Activated naive CD8-positive, alpha-beta T cell treated with anti-CD3 and anti-CD28 coated beads, Interleukin-2, amount 10 ng/mL, durations not matched to agents 7 days and 5 days (primary cell): ENCODE measurements at regions of chrX and their contacts with region 1.

Region 1: DNA sequence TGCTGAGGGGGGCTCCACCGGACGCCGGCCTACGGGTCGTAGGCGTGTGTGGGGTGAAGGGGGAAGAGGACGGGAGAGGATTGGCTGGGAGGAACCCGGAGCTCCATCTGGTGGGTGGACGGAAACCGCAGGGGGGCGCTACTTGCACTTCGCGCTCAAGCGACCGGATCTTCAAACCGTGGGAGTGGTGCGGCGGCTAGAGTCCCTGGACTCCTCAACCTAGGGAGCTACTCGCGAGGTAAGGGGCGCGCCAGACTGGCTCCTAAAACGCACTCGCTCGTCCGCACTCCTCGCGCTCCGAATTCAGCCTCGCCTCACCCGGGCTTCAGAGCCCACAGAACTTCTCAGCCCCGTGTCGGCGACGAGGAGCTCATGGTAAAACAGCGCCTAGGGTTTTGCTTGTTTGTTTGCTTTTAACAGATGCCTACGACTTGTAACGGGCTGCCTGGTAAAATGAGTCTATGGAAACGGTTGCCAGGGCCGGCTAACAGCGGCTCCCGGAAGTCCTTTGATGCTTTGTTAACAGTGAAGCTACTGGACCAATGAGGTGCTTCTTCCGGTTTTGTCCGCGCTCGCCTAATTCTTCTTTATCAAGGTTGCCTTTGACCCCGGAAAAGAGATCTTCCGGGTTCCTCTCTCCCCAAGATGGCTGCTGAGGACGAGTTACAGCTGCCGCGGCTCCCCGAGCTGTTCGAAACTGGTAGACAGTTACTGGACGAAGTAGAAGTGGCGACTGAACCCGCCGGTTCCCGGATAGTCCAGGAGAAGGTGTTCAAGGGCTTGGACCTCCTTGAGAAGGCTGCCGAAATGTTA is at the start of gene IGBP1:
- DNase-seq: peak; percentile 75
- ATAC-seq: peak; percentile 82
- H3K4me3 Mint-ChIP-seq: peak within 1 kb of the TSS; percentile 96
- H3K27ac Mint-ChIP-seq: peak within 1 kb of the TSS; percentile 98
- H3K4me1 Mint-ChIP-seq: peaks cover 14% of the 10 kb centered on the region
- H3K27me3 Mint-ChIP-seq: no peaks in the 10 kb centered on the region
- total RNA-seq, gene IGBP1: 52.8 to 57.8 TPM

Region 2: DNA sequence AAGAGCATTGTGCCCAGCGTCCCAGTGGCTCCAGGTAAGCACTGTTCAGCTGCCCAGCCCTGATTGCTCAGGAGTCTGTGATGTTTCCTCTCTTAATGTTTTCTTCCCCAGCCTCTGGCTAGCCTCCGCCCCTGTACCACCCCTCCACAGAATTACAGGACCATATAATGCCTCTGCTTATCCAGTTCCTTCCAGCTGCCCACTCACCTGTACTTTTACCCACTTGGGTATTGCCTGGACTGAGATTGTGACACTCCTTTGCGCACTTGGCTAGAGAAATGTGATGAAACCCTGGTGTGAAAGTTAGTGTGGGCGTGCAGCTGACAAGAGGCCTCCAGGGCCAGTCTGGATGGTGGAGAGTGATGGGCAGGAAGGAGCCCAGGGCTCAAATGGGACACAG is 83.6 kb before region 1 on chrX and contains the start of gene AWAT2:
- POLR2A ChIA-PET with region 1: no interaction called
- DNase-seq: no peak
- ATAC-seq: no peak
- H3K4me3 Mint-ChIP-seq: no peak within 1 kb of the TSS
- H3K27ac Mint-ChIP-seq: no peak within 1 kb of the TSS
- H3K4me1 Mint-ChIP-seq: no peaks in the 10 kb centered on the region
- H3K27me3 Mint-ChIP-seq: peaks cover 1% of the 10 kb centered on the region
- total RNA-seq, gene AWAT2: not detected

Region 3: DNA sequence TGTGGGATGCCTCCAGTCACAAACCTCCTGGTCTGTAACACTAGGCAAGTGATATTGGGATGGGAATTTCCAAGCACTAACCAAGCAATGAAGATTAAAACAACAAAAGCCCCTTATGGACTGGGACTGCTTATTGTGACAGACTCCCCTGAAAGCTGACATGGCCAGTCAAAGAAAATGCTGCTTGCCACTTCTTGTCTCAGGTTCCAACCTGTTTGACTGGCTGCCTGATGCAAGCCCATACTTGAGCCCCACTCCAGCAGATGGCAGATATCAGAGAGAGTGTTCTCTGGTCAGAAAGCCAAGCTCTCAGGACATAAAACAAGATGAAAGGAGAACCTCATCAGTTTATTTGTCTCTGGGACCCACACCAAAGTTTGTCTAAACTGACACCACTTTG is 15.8 kb before region 1 on chrX:
- POLR2A ChIA-PET with region 1: no interaction called
- DNase-seq: no peak
- ATAC-seq: no peak
- H3K4me3 Mint-ChIP-seq: no peak overlapping the region
- H3K27ac Mint-ChIP-seq: no peak overlapping the region
- H3K4me1 Mint-ChIP-seq: no peaks in the 10 kb centered on the region
- H3K27me3 Mint-ChIP-seq: peaks cover 4% of the 10 kb centered on the region

Region 4: DNA sequence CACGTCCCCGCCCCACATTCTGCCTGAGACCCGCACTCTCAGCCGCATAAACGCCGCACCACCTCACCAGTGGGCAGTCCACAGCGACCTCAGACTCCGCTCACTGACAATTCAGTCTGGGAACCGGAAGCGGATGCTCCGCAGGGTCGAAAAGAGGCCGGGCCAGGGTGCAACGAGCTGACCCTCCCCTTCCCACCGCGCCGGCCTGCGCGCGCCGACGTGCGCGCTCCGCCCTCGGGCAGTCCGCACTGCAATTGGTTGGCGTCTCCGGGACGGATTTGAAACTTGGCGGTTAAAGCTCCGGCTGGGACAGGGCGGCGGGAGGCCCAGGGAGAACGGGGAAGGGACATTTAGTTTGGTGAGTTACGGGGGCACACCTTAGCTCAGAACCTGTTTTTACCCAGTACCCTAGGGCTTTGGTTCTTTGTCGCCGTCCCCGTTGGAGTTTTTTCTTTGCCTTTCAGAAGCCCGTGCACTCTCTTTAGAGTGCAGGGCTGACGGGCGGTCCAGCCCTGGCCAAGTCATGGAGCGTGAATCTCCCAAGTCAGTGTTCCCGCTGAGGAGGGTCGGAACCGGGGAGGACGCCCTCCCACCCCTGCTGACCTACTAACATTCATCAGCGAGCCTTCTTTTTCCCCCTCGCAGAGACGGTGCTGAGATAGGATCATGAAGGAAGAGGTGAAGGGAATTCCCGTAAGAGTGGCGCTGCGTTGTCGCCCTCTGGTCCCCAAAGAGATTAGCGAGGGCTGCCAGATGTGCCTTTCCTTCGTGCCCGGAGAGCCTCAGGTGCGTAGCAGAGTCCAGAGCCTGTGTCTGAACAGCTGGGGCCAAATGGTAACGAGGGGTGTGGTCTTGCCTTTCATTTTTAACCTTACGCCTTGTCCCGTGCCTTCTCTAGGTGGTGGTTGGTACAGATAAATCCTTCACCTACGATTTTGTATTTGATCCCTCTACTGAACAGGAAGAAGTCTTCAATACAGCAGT is 156.6 kb after region 1 on chrX and contains the starts of genes KIF4A and PDZD11:
- POLR2A ChIA-PET with region 1: interaction called, 10 read pairs
- DNase-seq: peak; percentile 83
- ATAC-seq: peak; percentile 98
- H3K4me3 Mint-ChIP-seq: peak within 1 kb of the TSS; percentile 93
- H3K27ac Mint-ChIP-seq: peak within 1 kb of the TSS; percentile 89
- H3K4me1 Mint-ChIP-seq: peaks cover 17% of the 10 kb centered on the region
- H3K27me3 Mint-ChIP-seq: no peaks in the 10 kb centered on the region
- total RNA-seq, gene KIF4A: 27.9 to 28.8 TPM
- total RNA-seq, gene PDZD11: 27.0 to 31.2 TPM